Right ventricle myocardium inferior (tissue), 1 donor: ENCODE measurements at regions of chr10 and their contacts with region 1.

Region 1: GRCh38 chr10:11604865-11605650 is 6.4 kb downstream of the USP6NL start:
- DNase-seq: no peak
- ATAC-seq: no peak

Region 2: DNA sequence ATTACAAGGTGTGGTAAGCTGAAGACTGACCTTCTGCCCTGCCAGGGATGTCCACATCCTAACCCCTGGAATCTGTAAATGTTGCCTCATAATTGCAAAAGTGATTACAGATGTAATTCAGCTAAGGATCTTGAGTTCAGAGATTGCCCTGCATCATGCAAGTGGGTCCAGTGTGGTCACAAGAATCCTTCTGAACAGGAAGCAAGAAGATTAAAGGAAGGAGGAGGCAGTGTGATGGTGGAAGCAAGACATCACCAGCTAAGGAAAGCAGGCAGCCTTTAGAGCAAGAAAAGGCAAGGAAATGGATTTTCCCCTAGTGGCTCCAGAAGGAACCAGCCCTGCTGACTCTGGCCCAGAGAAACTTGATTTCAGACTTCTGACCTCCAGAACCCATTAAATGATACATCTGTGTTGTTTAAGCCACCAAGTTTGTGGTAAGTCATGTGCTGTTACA is 71.7 kb before region 1 on chr10:
- intact Hi-C with region 1: loop called (anchors 5 kb)
- DNase-seq: no peak
- ATAC-seq: peak; percentile 59

Region 3: DNA sequence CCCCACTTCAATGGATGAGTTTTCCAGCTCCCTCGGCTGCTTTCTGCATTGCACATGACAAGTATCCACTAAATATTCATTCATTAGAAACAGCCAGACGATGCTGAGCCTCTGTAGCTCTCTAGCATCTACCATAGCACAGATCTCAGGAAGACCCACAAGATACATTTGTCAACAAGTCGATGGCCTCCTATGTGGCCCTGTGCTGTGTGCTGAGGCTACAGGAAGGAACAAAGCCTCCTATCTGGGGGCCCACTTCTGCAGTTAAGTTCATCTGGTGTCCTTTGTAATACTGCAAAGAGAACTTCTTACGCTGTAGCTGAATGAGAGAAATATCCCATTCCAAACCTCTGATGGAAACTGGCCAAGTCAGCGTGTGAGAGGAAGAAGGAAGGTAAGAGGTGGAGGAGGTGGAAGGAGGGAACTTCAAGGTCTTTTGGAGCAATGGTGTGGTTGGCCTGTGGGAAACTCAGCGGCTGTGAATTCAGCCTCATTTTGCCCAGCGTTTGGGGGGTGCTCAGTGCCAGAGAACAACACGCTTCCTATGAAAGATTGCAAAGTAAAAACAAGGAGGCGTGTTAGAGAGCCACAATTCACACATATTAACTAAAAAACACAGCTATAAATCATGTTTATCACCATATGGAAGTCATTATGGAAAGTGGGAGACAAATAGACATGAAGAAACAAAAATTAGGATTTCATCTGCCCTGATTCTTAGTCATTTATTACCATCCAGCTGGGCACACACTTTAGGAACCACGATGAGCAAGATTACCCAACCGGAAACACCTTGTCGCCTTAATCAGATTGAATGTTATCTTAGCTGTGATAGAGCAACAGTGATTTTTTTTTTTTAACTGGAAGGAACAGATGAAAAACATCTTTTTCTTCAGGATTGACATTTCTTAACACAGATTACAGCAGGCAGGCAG is 68.6 kb after region 1 on chr10:
- intact Hi-C with region 1: no loop called
- DNase-seq: no peak
- ATAC-seq: no peak